CD4-positive, alpha-beta memory T cell (primary cell): ENCODE measurements at regions of chr11 and their contacts with region 1.

Region 1: GRCh38 chr11:119095066-119095880 is 6.4 kb downstream of the DPAGT1 start:
- DNase-seq: peak; percentile 99 to 100 (median 100)
- H3K4me3 ChIP-seq: peak overlapping the region; percentile 42 to 87
- H3K4me3 Mint-ChIP-seq: peak overlapping the region; percentile 84 to 97 (median 93)
- H3K27ac ChIP-seq: peak overlapping the region; percentile 81
- H3K27ac Mint-ChIP-seq: peak overlapping the region; percentile 86 to 96 (median 93)
- H3K4me1 ChIP-seq: peaks cover 34% of the 10 kb centered on the region
- H3K4me1 Mint-ChIP-seq: peaks cover 22 to 52% (median 38%) of the 10 kb centered on the region in 4 donors
- H3K27me3 ChIP-seq: no peaks in the 10 kb centered on the region
- H3K27me3 Mint-ChIP-seq: peaks cover 0 to 1% of the 10 kb centered on the region in 2 donors

Region 2: GRCh38 chr11:118928108-118928870 is 167.0 kb before region 1 on chr11:
- CTCF ChIA-PET with region 1: interaction called, 3 read pairs
- POLR2A ChIA-PET with region 1: interaction called, 4 read pairs
- intact Hi-C with region 1: loop called (anchors 5 kb)
- DNase-seq: peak; percentile 94 to 100 (median 97)
- H3K4me3 ChIP-seq: peak overlapping the region; percentile 89 to 97
- H3K4me3 Mint-ChIP-seq: peak overlapping the region; percentile 85 to 97 (median 94)
- H3K27ac ChIP-seq: peak overlapping the region; percentile 99
- H3K27ac Mint-ChIP-seq: peak overlapping the region; percentile 97 to 100 (median 100)
- H3K4me1 ChIP-seq: peaks cover 36% of the 10 kb centered on the region
- H3K4me1 Mint-ChIP-seq: peaks cover 26 to 65% (median 34%) of the 10 kb centered on the region in 4 donors
- H3K27me3 ChIP-seq: no peaks in the 10 kb centered on the region
- H3K27me3 Mint-ChIP-seq: peaks cover 1 to 2% of the 10 kb centered on the region in 2 donors

Region 3: GRCh38 chr11:119023741-119024140 is 71.5 kb before region 1 on chr11:
- CTCF ChIA-PET with region 1: interaction called, 5 read pairs
- POLR2A ChIA-PET with region 1: interaction called, 23 read pairs
- intact Hi-C with region 1: loop called (anchors 1 kb)
- DNase-seq: no peak
- H3K4me3 ChIP-seq: no peak overlapping the region
- H3K4me3 Mint-ChIP-seq: peak overlapping the region in 2 of 8 donors; percentile 22 to 54
- H3K27ac ChIP-seq: no peak overlapping the region
- H3K27ac Mint-ChIP-seq: peak overlapping the region in 4 of 7 donors; percentile 1 to 58 (median 13)
- H3K4me1 ChIP-seq: peaks cover 47% of the 10 kb centered on the region
- H3K4me1 Mint-ChIP-seq: peaks cover 24 to 63% (median 44%) of the 10 kb centered on the region in 4 donors
- H3K27me3 ChIP-seq: no peaks in the 10 kb centered on the region
- H3K27me3 Mint-ChIP-seq: no peaks in the 10 kb centered on the region

Region 4: GRCh38 chr11:119067371-119068222 is 27.7 kb before region 1 on chr11 and contains the start of gene VPS11:
- CTCF ChIA-PET with region 1: interaction called, 7 read pairs
- POLR2A ChIA-PET with region 1: interaction called, 77 read pairs
- intact Hi-C with region 1: loop called (anchors 1 kb)
- DNase-seq: peak; percentile 97 to 98 (median 97)
- H3K4me3 ChIP-seq: peak within 1 kb of the TSS; percentile 87 to 99
- H3K4me3 Mint-ChIP-seq: peak within 1 kb of the TSS; percentile 91 to 99 (median 94)
- H3K27ac ChIP-seq: peak within 1 kb of the TSS; percentile 88
- H3K27ac Mint-ChIP-seq: peak within 1 kb of the TSS; percentile 92 to 100 (median 98)
- H3K4me1 ChIP-seq: peaks cover 34% of the 10 kb centered on the region
- H3K4me1 Mint-ChIP-seq: peaks cover 23 to 43% (median 36%) of the 10 kb centered on the region in 4 donors
- H3K27me3 ChIP-seq: no peaks in the 10 kb centered on the region
- H3K27me3 Mint-ChIP-seq: no peaks in the 10 kb centered on the region
- total RNA-seq, gene VPS11: 56.2 to 61.2 TPM

Region 5: DNA sequence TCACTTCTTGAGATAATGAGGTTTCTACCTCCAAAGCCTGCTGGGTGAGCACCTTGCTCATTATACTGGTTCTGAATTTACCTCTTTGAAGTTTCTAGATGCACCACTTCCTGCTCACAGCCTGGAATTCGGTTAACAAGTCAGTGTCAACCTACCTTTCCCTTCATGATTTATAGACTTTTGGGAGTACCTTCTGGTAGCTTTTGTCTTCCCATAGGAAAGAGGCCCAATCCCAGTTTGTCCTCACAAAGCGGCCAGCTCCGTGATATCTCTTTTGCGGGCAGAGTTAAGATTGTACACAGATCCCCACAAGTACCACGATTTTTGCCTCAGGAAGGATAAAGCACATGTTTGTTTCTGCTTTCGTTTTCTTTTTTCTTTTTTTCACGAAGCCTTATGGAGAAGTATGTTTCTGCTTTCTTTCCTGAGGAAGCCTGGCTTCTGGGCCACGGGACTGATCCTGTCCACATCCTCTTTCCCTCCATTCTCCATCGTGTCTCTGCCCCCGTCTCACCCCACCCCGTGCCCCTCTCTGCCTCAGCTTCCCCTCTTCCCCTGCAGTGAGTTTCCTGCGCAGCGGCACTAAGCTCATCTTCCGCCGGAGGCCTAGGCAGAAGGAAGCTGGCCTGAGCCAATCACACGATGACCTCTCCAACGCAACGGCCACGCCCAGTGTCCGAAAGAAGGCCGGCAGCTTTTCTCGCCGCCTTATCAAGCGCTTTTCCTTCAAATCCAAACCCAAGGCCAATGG is 20.4 kb after region 1 on chr11:
- CTCF ChIA-PET with region 1: interaction called, 5 read pairs
- POLR2A ChIA-PET with region 1: interaction called, 210 read pairs
- intact Hi-C with region 1: no loop called
- DNase-seq: peak; percentile 56 to 65 (median 58)
- H3K4me3 ChIP-seq: peak overlapping the region in 1 of 2 donors; percentile 38
- H3K4me3 Mint-ChIP-seq: peak overlapping the region; percentile 75 to 87 (median 86)
- H3K27ac ChIP-seq: peak overlapping the region; percentile 63
- H3K27ac Mint-ChIP-seq: peak overlapping the region; percentile 83 to 97 (median 97)
- H3K4me1 ChIP-seq: peaks cover 37% of the 10 kb centered on the region
- H3K4me1 Mint-ChIP-seq: peaks cover 17 to 51% (median 30%) of the 10 kb centered on the region in 4 donors
- H3K27me3 ChIP-seq: no peaks in the 10 kb centered on the region
- H3K27me3 Mint-ChIP-seq: no peaks in the 10 kb centered on the region

Region 6: DNA sequence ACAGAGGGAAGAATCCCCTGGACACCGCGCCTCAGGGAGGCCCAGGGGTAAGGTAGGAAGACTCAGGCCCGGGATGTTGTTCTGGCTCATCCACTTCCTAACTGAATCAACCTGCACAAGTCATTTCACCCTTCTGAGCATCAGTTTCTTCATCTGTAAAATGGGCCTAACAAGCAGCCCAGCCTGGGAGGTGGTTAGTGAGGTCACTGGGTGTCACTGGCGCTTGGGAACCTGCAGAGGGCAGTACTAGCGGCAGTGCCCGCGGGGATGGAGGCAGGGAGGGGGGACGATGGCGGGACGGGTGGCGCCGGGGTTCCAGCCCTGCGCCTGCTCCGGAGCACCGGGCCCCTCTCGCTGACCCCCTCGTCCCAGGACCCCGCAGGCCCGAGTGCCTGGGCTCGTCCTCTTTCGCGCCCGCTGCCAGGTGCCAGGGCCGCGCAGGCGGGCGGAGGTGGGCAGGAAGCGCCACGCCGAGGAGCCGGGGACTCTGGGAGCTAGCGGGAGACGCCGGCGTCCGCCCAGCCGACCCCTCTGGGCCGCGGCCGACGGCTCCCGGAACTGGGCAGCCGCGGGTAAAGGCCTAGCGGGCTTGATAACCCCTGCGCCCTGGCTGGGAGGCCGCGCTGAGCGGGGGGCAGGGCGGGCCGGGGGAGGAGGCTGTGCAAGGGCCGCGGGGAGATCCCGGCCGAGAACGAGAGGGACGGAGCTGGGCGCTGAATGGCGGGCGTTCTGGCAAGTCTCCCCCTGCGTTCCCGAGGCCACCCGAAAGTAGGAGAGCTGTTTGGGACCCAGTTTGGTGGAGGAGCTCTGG is 73.4 kb after region 1 on chr11 and contains the start of gene NLRX1:
- CTCF ChIA-PET with region 1: interaction called, 5 read pairs
- POLR2A ChIA-PET with region 1: interaction called, 5 read pairs
- intact Hi-C with region 1: loop called (anchors 1 kb)
- DNase-seq: peak; percentile 81 to 83 (median 82)
- H3K4me3 ChIP-seq: peak within 1 kb of the TSS; percentile 78 to 79
- H3K4me3 Mint-ChIP-seq: peak within 1 kb of the TSS; percentile 89 to 91 (median 90)
- H3K27ac ChIP-seq: peak within 1 kb of the TSS; percentile 67
- H3K27ac Mint-ChIP-seq: peak within 1 kb of the TSS; percentile 68 to 90 (median 89)
- H3K4me1 ChIP-seq: peaks cover 6% of the 10 kb centered on the region
- H3K4me1 Mint-ChIP-seq: peaks cover 1 to 10% (median 8%) of the 10 kb centered on the region in 4 donors
- H3K27me3 ChIP-seq: no peaks in the 10 kb centered on the region
- H3K27me3 Mint-ChIP-seq: no peaks in the 10 kb centered on the region
- total RNA-seq, gene NLRX1: 8.8 to 9.2 TPM

Region 7: GRCh38 chr11:119284344-119285157 is 189.3 kb after region 1 on chr11:
- CTCF ChIA-PET with region 1: interaction called, 3 read pairs
- POLR2A ChIA-PET with region 1: interaction called, 10 read pairs
- intact Hi-C with region 1: no loop called
- DNase-seq: peak in 4 of 5 donors; percentile 62 to 64 (median 62)
- H3K4me3 ChIP-seq: no peak overlapping the region
- H3K4me3 Mint-ChIP-seq: peak overlapping the region in 1 of 8 donors; percentile 20
- H3K27ac ChIP-seq: no peak overlapping the region
- H3K27ac Mint-ChIP-seq: peak overlapping the region in 6 of 7 donors; percentile 30 to 87 (median 76)
- H3K4me1 ChIP-seq: peaks cover 9% of the 10 kb centered on the region
- H3K4me1 Mint-ChIP-seq: peaks cover 17 to 30% (median 21%) of the 10 kb centered on the region in 4 donors
- H3K27me3 ChIP-seq: no peaks in the 10 kb centered on the region
- H3K27me3 Mint-ChIP-seq: no peaks in the 10 kb centered on the region